Activated CD8-positive, alpha-beta T cell treated with anti-CD3 and anti-CD28 coated beads for 36 hours (primary cell): ENCODE measurements at regions of chr9 and their contacts with region 1.

Region 1: GRCh38 chr9:3441197-3441816 is 84.5 kb downstream of the RFX3 start:
- DNase-seq: peak; percentile 73
- ATAC-seq: peak; percentile 79
- H3K4me3 Mint-ChIP-seq: no peak overlapping the region
- H3K27ac Mint-ChIP-seq: no peak overlapping the region
- H3K4me1 Mint-ChIP-seq: peaks cover 2% of the 10 kb centered on the region
- H3K27me3 Mint-ChIP-seq: no peaks in the 10 kb centered on the region
- CTCF ChIP-seq: peak; percentile 71

Region 2: DNA sequence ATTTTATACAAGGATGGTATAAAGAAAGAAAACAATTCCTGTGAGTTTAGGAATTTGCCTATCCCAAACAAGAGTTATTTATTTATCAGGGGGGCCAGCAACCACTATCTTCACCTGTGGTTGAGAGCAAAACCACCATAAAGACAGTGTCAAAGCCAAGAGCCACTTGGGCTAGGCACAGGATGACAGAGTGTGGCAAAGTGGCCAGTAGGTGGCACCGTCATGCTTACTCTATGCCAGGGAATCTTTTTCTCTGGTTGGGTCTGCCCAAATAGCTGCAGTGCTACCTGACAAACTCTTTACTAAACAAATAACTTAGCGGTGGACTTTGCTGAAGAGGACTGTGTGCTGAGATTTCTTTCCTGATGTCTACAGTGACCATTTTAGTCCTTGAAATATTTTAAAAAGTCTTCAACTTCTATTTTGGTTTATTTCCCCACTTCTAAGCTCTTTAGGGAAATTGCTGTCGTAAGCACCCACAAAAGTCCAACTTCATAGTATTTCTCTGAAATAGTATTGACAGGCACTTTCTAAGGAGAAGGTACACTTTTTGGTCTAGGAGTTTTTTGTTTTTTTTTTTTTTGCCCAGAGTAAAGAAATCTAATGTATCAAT is 200.5 kb before region 1 on chr9:
- CTCF ChIA-PET with region 1: interaction called, 70 read pairs
- POLR2A ChIA-PET with region 1: no interaction called
- intact Hi-C with region 1: loop called (anchors 2 kb)
- DNase-seq: peak; percentile 85
- ATAC-seq: peak; percentile 90
- H3K4me3 Mint-ChIP-seq: no peak overlapping the region
- H3K27ac Mint-ChIP-seq: no peak overlapping the region
- H3K4me1 Mint-ChIP-seq: peaks cover 10% of the 10 kb centered on the region
- H3K27me3 Mint-ChIP-seq: no peaks in the 10 kb centered on the region
- CTCF ChIP-seq: peak; percentile 85

Region 3: DNA sequence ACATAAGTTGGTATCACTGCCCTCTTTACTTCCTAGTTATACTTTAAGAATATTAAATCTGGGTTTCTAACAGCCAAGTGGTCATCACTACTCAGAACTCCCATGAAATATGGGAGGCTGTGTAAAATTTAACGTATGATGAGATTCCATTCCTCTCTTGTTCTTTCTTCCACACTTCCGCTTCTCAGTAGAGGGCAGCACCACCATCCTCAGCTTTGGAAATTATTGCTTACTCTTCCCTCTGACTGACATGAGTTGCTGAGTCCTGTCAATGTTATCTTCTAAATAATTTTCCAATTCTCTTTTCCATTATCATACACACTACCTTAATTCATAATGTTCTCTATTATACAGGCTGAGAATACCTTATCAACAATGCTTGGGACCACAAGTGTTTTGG is 109.5 kb before region 1 on chr9:
- CTCF ChIA-PET with region 1: interaction called, 36 read pairs
- POLR2A ChIA-PET with region 1: no interaction called
- intact Hi-C with region 1: no loop called
- DNase-seq: peak; percentile 24
- ATAC-seq: no peak
- H3K4me3 Mint-ChIP-seq: no peak overlapping the region
- H3K27ac Mint-ChIP-seq: no peak overlapping the region
- H3K4me1 Mint-ChIP-seq: peaks cover 3% of the 10 kb centered on the region
- H3K27me3 Mint-ChIP-seq: no peaks in the 10 kb centered on the region
- CTCF ChIP-seq: peak; percentile 14

Region 4: GRCh38 chr9:3413984-3414383 is 27.3 kb before region 1 on chr9:
- CTCF ChIA-PET with region 1: interaction called, 12 read pairs
- POLR2A ChIA-PET with region 1: no interaction called
- intact Hi-C with region 1: no loop called
- DNase-seq: no peak
- ATAC-seq: no peak
- H3K4me3 Mint-ChIP-seq: no peak overlapping the region
- H3K27ac Mint-ChIP-seq: no peak overlapping the region
- H3K4me1 Mint-ChIP-seq: no peaks in the 10 kb centered on the region
- H3K27me3 Mint-ChIP-seq: no peaks in the 10 kb centered on the region
- CTCF ChIP-seq: no peak